Activated CD4-positive, alpha-beta memory T cell treated with anti-CD3 and anti-CD28 coated beads, Interleukin-2, amount 10 ng/mL, durations not matched to agents 7 days and 5 days (primary cell): ENCODE measurements at regions of chr11 and their contacts with region 1.

Region 1: GRCh38 chr11:78202733-78203167 is 14.0 kb downstream of the USP35 start:
- DNase-seq: peak; percentile 61
- H3K4me3 Mint-ChIP-seq: peak overlapping the region; percentile 60
- H3K27ac Mint-ChIP-seq: peak overlapping the region; percentile 82
- H3K4me1 Mint-ChIP-seq: peaks cover 31% of the 10 kb centered on the region
- H3K27me3 Mint-ChIP-seq: no peaks in the 10 kb centered on the region

Region 2: GRCh38 chr11:78188286-78189173 is 14.2 kb before region 1 on chr11 and contains the starts of genes KCTD21 and USP35:
- CTCF ChIA-PET with region 1: no interaction called
- POLR2A ChIA-PET with region 1: interaction called, 27 read pairs
- DNase-seq: peak; percentile 93
- H3K4me3 Mint-ChIP-seq: peak within 1 kb of the TSS; percentile 98
- H3K27ac Mint-ChIP-seq: peak within 1 kb of the TSS; percentile 82
- H3K4me1 Mint-ChIP-seq: peaks cover 48% of the 10 kb centered on the region
- H3K27me3 Mint-ChIP-seq: no peaks in the 10 kb centered on the region
- total RNA-seq, gene KCTD21: 7.5 to 9.3 TPM
- total RNA-seq, gene USP35: 10.8 to 12.1 TPM